HCT116 (cell line): ENCODE measurements at regions of chr5 and their contacts with region 1.

Region 1: DNA sequence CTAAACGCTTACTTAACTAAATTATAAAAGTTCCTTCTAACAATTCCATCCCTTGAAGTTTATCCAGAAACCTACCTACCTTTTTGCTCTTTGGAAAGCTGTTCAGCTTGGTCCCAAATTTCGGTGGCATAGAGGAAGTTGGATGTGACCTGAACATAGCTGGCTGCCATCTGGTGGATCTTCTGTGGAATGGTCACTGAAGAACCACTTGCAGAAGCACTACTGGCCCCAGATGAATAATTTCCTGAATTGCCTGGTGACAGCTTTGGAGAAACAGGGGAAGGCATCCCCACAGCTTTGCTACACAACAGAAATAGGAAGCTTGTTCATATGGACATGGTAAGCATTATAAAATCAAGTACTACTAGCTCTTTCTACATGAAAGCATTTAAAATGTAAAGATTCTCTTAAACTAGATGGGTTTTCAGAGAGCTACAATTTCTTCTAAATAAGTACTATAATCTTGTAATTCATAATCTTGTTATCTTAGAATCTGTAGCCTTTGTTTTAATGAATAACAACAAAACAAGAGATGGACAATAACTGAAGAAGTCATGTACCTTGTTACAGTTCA is 9.9 kb downstream of the LEAP2 start:
- DNase-seq: peak; percentile 52
- ATAC-seq: peak; percentile 98
- H3K4me3 ChIP-seq: no peak overlapping the region
- H3K27ac ChIP-seq: no peak overlapping the region
- H3K4me1 ChIP-seq: no peaks in the 10 kb centered on the region
- H3K27me3 ChIP-seq: no peaks in the 10 kb centered on the region
- CTCF ChIP-seq: peak; percentile 67 to 78 (median 71); a peak in 5 of 6 replicates
- POLR2A ChIP-seq: no peak
- RAD21 ChIP-seq: peak; percentile 67

Region 2: DNA sequence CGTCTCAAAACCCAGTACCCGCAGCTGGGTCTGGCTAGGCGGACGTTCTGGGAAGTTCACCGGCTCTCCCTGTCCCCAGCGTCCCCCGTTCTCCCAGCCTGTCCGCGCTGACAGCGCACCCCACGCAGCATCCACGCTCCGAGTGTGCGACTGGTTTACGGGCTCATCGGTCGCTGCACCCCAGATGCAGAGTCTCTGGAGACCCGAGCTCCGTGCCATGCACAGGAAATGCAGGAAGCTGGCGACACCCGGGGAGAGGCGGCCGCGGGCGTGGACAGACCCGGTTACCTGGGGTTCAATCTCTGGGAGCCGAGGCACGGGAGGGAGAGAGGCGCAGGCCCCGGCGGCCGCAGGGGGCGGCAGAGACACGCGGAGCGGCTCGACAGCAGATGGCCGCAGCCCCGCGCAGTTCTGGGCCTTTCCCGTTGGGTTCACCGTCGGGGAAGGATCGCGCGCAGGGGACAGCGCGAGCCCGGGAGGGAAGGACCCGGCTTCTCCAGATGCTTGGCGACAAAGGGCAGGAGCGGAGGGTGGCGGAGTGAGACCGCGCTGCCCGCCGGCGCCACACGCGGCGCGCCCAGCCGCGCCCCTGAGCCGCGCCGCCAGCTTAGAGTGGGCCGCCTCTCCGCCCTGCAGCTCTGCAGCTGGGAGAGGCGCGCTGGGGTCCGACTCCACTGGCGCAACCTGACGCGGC is 53.5 kb before region 1 on chr5:
- CTCF ChIA-PET with region 1: no interaction called
- POLR2A ChIA-PET with region 1: no interaction called
- RAD21 ChIA-PET with region 1: no interaction called
- intact Hi-C with region 1: loop called (anchors 1 kb)
- DNase-seq: peak; percentile 38
- ATAC-seq: peak; percentile 82
- H3K4me3 ChIP-seq: peak overlapping the region; percentile 65 to 73
- H3K27ac ChIP-seq: peak overlapping the region; percentile 75
- H3K4me1 ChIP-seq: peaks cover 12 to 19% of the 10 kb centered on the region in 2 experiments; a peak in 3 of 4 replicates
- H3K27me3 ChIP-seq: no peaks in the 10 kb centered on the region
- CTCF ChIP-seq: peak; percentile 54 to 91 (median 72)
- POLR2A ChIP-seq: no peak
- RAD21 ChIP-seq: peak; percentile 86

Region 3: DNA sequence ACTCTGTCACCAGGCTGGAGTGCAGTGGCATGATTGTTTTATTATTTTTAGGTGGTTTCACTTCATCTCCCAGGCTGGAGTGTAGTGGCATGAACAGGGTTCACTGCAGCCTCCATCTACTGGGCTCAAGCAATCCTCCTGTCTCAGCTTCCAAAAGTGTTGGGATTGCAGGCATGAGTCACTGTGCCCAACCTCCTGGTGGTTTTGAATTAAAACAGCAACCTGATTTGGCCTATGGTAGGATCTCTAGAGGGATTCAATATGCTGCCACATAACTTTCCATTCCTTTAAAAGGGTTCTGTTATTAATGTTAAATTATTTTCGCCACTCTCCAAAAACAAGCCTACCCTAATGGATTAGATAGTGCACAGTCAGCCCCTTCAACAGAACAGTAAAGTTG is 158.6 kb after region 1 on chr5:
- CTCF ChIA-PET with region 1: no interaction called
- POLR2A ChIA-PET with region 1: no interaction called
- RAD21 ChIA-PET with region 1: no interaction called
- intact Hi-C with region 1: no loop called
- DNase-seq: no peak
- ATAC-seq: peak; percentile 71
- H3K4me3 ChIP-seq: no peak overlapping the region
- H3K27ac ChIP-seq: no peak overlapping the region
- H3K4me1 ChIP-seq: peaks cover 15 to 22% of the 10 kb centered on the region in 2 experiments
- H3K27me3 ChIP-seq: no peaks in the 10 kb centered on the region
- CTCF ChIP-seq: no peak
- POLR2A ChIP-seq: no peak
- RAD21 ChIP-seq: no peak

Region 4: GRCh38 chr5:133247881-133248624 is 364.7 kb after region 1 on chr5:
- CTCF ChIA-PET with region 1: no interaction called
- POLR2A ChIA-PET with region 1: no interaction called
- RAD21 ChIA-PET with region 1: no interaction called
- intact Hi-C with region 1: no loop called
- DNase-seq: peak; percentile 60
- ATAC-seq: peak; percentile 57
- H3K4me3 ChIP-seq: no peak overlapping the region
- H3K27ac ChIP-seq: no peak overlapping the region
- H3K4me1 ChIP-seq: peaks cover 27 to 58% of the 10 kb centered on the region in 2 experiments
- H3K27me3 ChIP-seq: no peaks in the 10 kb centered on the region
- CTCF ChIP-seq: peak in 2 of 3 experiments; percentile 69 to 89; a peak in 4 of 6 replicates
- POLR2A ChIP-seq: no peak
- RAD21 ChIP-seq: no peak